Cardiac septum (tissue), 1 donor: ENCODE measurements at regions of chr19 and their contacts with region 1.

Region 1: DNA sequence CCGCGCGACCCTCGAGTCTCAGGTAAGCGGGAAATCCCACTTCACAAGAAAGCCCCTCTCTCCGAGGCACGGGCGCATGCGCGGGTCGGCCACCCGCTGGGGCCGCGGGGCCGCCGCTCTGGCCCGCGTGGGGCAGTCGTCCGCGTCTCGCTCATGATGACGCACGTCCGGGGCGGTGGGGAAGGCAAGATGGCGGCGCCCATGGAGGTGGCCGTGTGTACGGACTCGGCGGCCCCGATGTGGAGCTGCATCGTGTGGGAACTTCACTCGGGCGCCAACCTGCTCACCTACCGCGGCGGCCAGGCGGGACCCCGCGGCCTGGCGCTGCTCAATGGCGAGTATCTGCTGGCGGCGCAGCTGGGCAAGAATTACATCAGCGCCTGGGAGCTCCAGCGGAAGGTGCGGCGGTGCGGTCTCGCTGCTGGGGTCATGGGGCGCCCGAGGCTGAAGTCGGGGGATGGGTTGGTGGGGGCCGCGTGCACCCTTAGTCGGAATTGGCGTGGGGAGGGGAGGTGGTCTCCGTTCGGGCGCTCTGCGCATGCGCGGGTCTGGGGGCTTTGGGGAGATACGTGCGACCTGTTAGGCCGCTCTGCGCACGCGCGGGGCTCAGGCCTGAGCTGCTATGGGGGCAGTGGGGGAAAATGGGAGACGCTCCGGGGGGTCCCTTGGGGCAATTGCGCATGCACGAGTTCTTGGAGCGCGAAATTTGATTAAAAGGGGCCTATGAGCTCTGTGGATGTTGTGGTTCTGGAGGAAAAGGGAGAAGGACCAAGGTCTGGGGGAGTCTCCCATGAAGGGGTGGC is at the start of gene WDR18:
- DNase-seq: peak; percentile 97
- total RNA-seq, gene WDR18: 17.6 TPM

Region 2: GRCh38 chr19:771332-771785 is 213.0 kb before region 1 on chr19:
- intact Hi-C with region 1: loop called (anchors 5 kb)
- DNase-seq: no peak

Region 3: DNA sequence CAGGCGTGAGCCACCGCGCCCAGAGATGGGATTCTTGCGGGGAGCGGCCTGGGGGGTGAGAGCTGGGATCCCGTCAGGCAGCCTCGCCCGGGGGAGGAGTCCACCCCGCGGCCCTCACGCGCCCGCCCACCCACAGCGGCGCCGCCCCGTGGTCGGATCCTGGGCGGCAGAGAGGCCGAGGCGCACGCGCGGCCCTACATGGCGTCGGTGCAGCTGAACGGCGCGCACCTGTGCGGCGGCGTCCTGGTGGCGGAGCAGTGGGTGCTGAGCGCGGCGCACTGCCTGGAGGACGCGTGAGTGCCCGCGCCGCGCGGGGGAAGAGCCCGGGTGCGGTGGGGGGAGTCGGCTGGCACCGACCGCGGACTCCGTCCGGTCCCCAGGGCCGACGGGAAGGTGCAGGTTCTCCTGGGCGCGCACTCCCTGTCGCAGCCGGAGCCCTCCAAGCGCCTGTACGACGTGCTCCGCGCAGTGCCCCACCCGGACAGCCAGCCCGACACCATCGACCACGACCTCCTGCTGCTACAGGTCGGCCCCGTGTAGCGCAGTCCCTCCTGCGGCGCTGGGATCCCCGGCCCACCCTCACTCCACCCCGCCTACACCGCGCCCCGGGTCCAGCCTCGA is 123.8 kb before region 1 on chr19:
- intact Hi-C with region 1: loop called (anchors 5 kb)
- DNase-seq: no peak

Region 4: DNA sequence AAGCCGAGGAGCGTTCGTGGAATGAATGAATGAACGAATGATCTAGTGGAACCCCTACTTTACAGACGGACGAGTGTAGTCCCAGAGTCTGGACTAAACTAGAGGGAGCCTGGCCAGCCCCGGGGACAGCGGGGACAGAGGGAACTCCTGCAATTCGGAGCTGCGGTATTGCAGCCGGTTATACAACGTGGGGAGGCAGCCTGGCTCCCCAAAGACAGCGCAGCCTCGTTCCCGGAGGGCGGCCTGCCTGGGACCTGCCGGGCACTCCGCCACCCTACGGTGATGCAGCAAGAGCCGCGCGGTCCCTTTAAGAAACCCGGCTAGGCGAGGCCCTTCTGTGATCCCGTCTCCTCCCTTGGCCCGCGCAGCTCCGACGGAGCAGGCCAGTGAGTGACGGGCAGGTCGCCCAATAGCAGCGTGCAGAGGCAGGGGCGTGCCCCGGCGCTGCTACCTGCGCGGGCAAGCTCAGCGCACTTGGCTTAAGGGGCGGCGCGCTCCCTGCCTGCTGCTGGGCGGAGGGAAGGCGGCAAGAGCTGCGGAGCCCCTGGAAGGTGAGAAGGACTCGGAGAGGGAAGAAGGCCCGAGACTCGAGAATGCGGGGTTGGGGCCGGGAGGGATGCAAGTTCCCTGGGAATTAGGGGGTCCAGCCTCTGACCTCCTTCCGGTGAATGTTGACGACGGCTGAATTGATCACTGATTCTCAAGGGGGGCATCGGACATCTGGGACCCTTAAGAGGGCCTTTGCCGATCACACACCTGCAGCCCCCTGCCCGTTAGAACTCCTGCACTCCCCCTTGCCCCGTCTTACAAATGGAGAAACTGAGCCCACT is 55.5 kb after region 1 on chr19 and contains the start of gene ABCA7:
- intact Hi-C with region 1: no loop called
- DNase-seq: peak; percentile 100
- total RNA-seq, gene ABCA7: 10.5 TPM